ENCODE measurements at regions of chr10 and their contacts with region 1.

Region 1: GRCh38 chr10:127853868-127854768 is 38.6 kb downstream of the CLRN3 start:
- DNase-seq: no peak

Region 2: DNA sequence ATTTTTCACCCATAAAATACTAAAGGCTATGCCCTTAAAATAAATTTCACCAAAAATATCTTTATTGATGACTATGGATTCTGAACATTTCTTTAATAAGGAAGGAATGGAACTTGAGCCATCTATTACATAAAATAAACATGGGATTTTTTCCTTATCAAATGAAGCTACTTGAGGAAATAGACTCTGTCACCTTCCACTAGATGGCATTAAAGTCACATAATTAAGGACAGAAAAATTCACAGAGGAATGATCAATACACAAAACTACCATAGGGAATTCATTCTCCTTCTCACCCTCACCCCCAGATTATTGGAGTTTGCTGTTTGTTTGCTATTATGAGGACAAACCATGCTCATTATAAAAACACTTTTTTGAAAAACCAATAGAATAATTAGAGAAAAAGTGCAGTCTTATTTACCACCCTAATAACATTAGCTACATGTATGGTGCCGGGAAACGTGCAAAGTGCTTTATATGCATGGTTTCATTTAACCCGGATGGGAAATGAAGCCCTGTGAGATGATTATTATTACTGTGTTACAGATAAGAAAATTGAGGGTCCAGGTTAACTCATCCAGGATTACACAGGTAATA is 138.2 kb before region 1 on chr10:
- intact Hi-C with region 1: loop called (anchors 2 kb)
- DNase-seq: no peak

Region 3: DNA sequence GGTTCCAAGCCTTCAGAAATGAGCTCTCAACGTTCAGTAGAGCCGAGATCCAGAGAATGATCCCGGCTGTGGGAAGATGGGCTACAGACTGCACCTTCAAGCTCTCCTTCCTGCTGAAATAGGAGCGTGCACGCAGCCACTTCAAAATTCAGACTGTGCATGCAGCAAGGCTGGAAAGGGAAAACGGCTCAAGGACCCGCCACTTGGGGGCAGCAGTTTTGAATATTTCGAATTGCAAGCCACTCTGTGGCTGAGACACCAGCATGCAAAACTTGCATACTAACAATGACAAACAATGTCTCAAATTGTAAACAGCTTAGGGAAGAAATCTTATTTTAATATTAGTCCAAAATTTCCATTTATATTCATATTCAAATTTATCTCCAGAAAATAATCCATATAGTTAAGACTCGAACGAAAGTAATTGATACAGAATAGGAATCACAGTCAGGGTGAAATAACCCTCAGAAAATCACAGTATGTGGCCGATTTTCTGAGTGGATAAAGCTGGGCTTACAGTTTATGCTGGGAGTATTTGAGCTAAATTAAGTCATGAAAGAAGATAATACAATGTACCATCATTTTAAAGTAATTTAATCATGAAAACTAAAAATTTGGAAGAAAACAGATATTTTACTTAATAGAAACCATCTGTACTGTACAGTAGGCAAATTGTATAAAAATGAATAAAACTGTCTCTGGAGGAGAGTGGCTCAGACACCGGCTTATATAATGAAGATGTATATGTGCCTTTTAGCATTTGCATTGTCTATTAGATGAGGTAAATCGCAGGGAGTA is 410.0 kb after region 1 on chr10:
- intact Hi-C with region 1: no loop called
- DNase-seq: no peak